Activated B cell treated with CpG ODN at 0.5 μM for 24 hours (primary cell): ENCODE measurements at regions of chr7 and their contacts with region 1.

Region 1: DNA sequence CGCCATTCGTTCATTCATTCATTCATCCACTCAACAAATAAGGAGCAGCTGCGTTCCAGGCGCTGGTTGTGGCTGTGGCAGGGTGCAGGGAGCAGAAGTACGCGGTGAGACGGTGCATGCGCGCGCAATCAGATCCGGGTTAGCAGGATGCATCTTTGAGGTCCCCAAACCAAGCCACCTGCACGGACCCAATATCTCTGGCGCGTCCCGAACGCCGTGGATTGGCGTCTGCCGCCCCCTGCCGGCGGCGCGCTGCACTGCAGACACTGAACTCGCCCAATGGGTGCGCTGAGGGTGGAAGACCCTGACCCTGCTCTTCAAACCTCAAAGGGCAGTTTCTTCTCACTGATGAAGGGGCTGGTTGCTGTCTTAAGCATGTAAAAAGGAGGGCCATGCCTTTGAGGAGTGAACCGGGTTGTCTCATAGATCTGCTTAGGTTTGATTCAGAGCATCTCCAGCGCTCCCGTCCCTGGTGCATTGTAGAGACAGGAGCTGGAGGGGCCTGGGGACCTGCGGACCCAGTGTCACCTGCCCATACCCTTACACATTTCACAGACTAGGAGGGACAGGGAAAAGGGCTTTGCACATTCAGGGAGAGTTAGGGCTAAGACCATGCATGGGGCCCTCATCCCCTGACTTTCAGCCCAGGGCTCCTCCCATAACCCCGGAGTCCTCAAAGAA is 102.5 kb downstream of the RAMP3 start:
- DNase-seq: peak; percentile 65
- ATAC-seq: peak; percentile 64
- H3K4me3 Mint-ChIP-seq: no peak overlapping the region
- H3K27ac Mint-ChIP-seq: no peak overlapping the region
- H3K4me1 Mint-ChIP-seq: peaks cover 24% of the 10 kb centered on the region
- H3K27me3 Mint-ChIP-seq: peaks cover 36% of the 10 kb centered on the region
- CTCF ChIP-seq: no peak

Region 2: DNA sequence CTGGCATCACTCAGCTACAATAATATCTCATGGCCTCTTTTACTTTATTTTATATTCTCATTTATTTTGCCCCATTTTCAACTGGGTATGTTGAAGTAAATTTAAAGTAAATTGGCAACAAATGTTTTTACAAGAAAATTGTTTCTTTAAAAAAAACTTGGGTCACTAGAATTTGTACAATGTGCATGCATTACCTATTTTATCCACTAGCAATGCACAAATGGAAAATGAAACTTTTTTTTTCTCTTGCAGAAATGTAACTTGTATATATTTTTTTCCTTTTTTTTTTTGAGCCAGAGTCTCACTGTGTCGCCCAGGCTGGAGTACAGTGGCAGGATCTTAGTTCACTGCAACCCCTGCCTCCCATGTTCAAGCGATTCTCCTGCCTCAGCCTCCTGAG is 401.9 kb before region 1 on chr7:
- CTCF ChIA-PET with region 1: interaction called, 3 read pairs
- POLR2A ChIA-PET with region 1: no interaction called
- intact Hi-C with region 1: loop called (anchors 2 kb)
- DNase-seq: no peak
- ATAC-seq: no peak
- H3K4me3 Mint-ChIP-seq: no peak overlapping the region
- H3K27ac Mint-ChIP-seq: no peak overlapping the region
- H3K4me1 Mint-ChIP-seq: peaks cover 4% of the 10 kb centered on the region
- H3K27me3 Mint-ChIP-seq: peaks cover 2% of the 10 kb centered on the region
- CTCF ChIP-seq: no peak

Region 3: GRCh38 chr7:45157653-45158401 is 102.3 kb before region 1 on chr7 and contains the start of gene RAMP3:
- CTCF ChIA-PET with region 1: interaction called, 4 read pairs
- POLR2A ChIA-PET with region 1: interaction called, 3 read pairs
- intact Hi-C with region 1: loop called (anchors 1 kb)
- DNase-seq: no peak
- ATAC-seq: no peak
- H3K4me3 Mint-ChIP-seq: peak within 1 kb of the TSS; percentile 2
- H3K27ac Mint-ChIP-seq: no peak within 1 kb of the TSS
- H3K4me1 Mint-ChIP-seq: peaks cover 13% of the 10 kb centered on the region
- H3K27me3 Mint-ChIP-seq: peaks cover 29% of the 10 kb centered on the region
- CTCF ChIP-seq: no peak
- total RNA-seq, gene RAMP3: not detected in 2 replicates

Region 4: GRCh38 chr7:45236666-45237065 is 23.4 kb before region 1 on chr7:
- CTCF ChIA-PET with region 1: no interaction called
- POLR2A ChIA-PET with region 1: no interaction called
- intact Hi-C with region 1: no loop called
- DNase-seq: no peak
- ATAC-seq: no peak
- H3K4me3 Mint-ChIP-seq: no peak overlapping the region
- H3K27ac Mint-ChIP-seq: no peak overlapping the region
- H3K4me1 Mint-ChIP-seq: no peaks in the 10 kb centered on the region
- H3K27me3 Mint-ChIP-seq: peaks cover 23% of the 10 kb centered on the region
- CTCF ChIP-seq: no peak